ENCODE measurements at regions of chr17 and their contacts with region 1.

Region 1: GRCh38 chr17:9261081-9262012 is 240.0 kb downstream of the NTN1 start:
- DNase-seq: no peak
- H3K4me3 ChIP-seq: no peak overlapping the region
- H3K27ac ChIP-seq: no peak overlapping the region
- H3K27me3 ChIP-seq: no peaks in the 10 kb centered on the region
- CTCF ChIP-seq: no peak

Region 2: GRCh38 chr17:9470171-9470570 is 208.8 kb after region 1 on chr17:
- intact Hi-C with region 1: loop called in 1 of 2 experiments (anchors 10 kb)
- DNase-seq: no peak
- H3K4me3 ChIP-seq: no peak overlapping the region
- H3K27ac ChIP-seq: peak overlapping the region in 1 of 59 donors; percentile 16
- H3K27me3 ChIP-seq: no peaks in the 10 kb centered on the region
- CTCF ChIP-seq: no peak